K562 (cell line): ENCODE measurements at regions of chr3 and their contacts with region 1.

Region 1: GRCh38 chr3:196081791-196082618 is at the start of gene TFRC:
- DNase-seq: peak; percentile 99
- ATAC-seq: peak; percentile 89
- H3K4me3 ChIP-seq: peak within 1 kb of the TSS; percentile 90
- H3K27ac ChIP-seq: peak within 1 kb of the TSS; percentile 89
- H3K4me1 ChIP-seq: peaks cover 10 to 14% of the 10 kb centered on the region in 2 experiments; a peak in 4 of 5 replicates
- H3K27me3 ChIP-seq: no peaks in the 10 kb centered on the region
- CTCF ChIP-seq: no peak; a peak in 1 of 6 replicates
- EP300 ChIP-seq: peak; percentile 59
- POLR2A ChIP-seq: peak; percentile 100
- RAD21 ChIP-seq: peak in 1 of 2 experiments; percentile 22; a peak in 2 of 4 replicates
- polyA plus RNA-seq, gene TFRC: 149 to 308 TPM

Region 2: DNA sequence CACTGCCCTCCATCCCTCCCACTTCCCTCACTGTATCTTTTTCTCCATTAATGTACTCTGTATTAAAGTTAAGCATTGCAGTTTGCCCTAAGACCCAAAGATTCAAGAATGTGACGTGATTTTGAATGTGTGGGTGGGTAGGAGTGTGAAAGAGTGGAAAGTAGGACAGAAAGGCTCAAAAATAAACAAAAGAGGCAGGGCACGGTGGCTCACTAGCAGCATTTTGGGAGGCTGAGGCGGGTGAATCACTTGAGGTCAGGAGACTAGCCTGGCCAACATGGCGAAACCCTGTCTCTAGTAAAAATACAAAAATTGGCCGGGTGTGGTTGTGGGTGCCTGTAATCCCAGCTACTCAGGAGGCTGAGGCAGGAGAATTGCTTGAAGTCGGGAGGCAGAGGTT is 18.5 kb before region 1 on chr3:
- CTCF ChIA-PET with region 1: no interaction called
- POLR2A ChIA-PET with region 1: interaction called, 25 read pairs
- in situ Hi-C with region 1: no loop called
- intact Hi-C with region 1: no loop called
- DNase-seq: no peak
- ATAC-seq: no peak
- H3K4me3 ChIP-seq: no peak overlapping the region
- H3K27ac ChIP-seq: no peak overlapping the region
- H3K4me1 ChIP-seq: no peaks in the 10 kb centered on the region
- H3K27me3 ChIP-seq: no peaks in the 10 kb centered on the region
- CTCF ChIP-seq: no peak
- EP300 ChIP-seq: no peak
- POLR2A ChIP-seq: peak; percentile 54
- RAD21 ChIP-seq: no peak

Region 3: DNA sequence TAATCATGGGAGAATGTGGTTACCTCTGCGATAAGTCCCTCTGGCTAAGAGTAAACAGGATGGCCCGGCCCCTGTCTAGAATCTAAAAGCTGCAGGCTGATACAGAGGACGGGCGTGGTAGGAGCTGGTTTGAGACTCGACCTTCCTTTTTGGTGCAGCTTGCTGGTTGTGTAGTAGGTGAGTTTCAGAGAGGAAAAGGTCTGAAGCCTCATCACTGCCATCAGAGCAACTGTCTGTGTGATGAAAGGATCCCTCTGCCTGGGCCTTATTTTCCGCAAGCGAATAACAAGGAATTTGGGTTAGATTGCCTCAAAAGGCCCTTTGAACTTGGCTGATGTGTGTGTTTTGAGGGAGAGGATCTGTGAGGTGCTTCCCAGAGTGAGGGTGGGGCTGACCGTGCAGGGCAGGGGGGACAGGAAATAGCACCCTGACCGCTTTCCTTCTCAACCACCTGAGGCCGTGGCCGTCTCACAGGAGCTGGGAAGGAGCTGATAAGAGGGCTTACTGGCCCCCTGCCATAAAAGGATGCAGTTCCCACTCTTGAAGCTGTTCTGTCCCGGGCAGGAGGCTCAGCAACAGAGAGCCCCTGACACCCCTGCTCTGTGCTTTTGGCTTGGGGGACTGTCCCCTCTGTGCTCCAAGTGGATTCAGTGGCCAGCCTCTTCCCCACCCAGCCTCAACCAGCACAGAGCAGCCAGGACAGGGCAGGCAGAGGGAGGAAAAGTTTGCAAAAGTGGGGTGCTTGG is 45.5 kb after region 1 on chr3:
- CTCF ChIA-PET with region 1: no interaction called
- POLR2A ChIA-PET with region 1: interaction called, 11 read pairs
- in situ Hi-C with region 1: no loop called
- intact Hi-C with region 1: loop called (anchors 1 kb)
- DNase-seq: peak; percentile 81 to 98 (median 88)
- ATAC-seq: peak; percentile 90
- H3K4me3 ChIP-seq: peak overlapping the region; percentile 14; the same call in 1 of the 2 replicates
- H3K27ac ChIP-seq: peak overlapping the region; percentile 96
- H3K4me1 ChIP-seq: peaks cover 33% of the 10 kb centered on the region in 2 experiments
- H3K27me3 ChIP-seq: no peaks in the 10 kb centered on the region
- CTCF ChIP-seq: peak in 2 of 3 experiments; percentile 15 to 49; a peak in 2 of 6 replicates
- EP300 ChIP-seq: peak; percentile 89
- POLR2A ChIP-seq: peak; percentile 53; the same call in 1 of the 2 replicates
- RAD21 ChIP-seq: peak; percentile 43 to 67; a peak in 3 of 4 replicates

Region 4: DNA sequence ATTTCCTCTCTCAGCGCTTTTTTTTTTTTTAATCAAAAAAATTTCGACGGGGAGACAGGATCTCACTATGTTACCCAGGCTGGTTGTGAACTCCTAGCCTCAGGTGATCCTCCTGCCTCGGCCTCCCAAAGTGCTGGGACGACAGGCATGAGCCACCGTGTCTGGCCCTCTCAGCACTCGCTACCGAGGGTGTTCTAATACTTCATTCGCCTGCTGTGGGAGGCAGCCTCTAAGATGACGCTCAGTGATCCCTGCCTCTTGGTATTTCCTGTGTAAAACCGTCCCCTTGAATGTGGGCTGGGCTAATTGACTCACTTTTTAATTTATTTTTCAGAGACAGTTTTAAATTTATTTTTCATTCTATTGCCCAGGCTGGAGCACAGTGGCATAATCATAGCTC is 62.7 kb after region 1 on chr3:
- CTCF ChIA-PET with region 1: no interaction called
- POLR2A ChIA-PET with region 1: interaction called, 39 read pairs
- in situ Hi-C with region 1: no loop called
- intact Hi-C with region 1: loop called (anchors 2 kb)
- DNase-seq: peak in 1 of 4 experiments; percentile 44
- ATAC-seq: no peak
- H3K4me3 ChIP-seq: peak overlapping the region; percentile 24; the same call in 1 of the 2 replicates
- H3K27ac ChIP-seq: peak overlapping the region; percentile 99
- H3K4me1 ChIP-seq: peaks cover 62 to 66% of the 10 kb centered on the region in 2 experiments
- H3K27me3 ChIP-seq: no peaks in the 10 kb centered on the region
- CTCF ChIP-seq: no peak
- EP300 ChIP-seq: no peak
- POLR2A ChIP-seq: no peak
- RAD21 ChIP-seq: no peak

Region 5: DNA sequence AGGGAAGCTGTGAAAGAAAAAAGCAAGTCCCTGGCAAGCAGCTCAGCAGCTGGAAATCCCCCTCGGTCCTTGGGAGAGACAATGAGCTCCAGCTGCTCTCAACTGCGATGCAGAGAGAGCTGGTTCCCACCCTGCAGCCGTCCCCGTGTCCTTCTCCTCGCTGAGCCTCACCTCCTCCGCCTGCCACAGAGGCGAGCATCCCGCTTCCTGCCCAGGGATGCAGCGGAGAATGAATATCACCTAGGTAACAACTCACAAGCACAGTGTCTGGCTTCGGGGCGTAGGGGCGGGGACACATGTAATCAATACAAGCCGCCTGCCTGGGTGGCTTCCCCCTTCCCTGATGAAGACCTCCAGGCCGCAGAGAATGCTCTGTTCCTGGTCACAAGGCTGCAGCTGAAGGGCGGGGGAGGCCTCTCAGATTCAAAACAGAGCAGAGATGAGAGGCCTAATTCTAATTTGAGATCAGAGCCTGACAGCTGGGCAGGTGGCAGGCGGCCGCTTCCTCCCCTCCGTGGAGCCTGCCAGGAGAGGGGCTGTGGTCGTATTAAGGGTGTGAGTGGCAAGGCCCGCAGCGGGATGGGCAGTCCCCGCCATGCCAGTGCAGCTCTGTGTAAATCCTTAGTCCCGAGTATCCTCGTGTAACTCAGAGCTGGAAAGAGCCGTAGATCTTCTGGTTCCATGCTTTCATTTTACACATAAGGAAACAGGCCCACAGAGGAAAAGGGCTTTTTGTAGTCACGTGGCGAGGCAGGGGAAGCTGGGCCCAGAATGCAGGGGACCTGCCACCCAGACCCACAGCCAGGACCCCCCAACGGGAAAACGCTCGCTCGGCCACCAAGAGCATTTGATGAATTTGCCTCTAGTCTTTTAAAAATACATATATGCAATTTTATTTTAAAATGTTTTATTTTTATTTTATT is 104.9 kb after region 1 on chr3:
- CTCF ChIA-PET with region 1: no interaction called
- POLR2A ChIA-PET with region 1: interaction called, 28 read pairs
- in situ Hi-C with region 1: loop called (anchors 5 kb)
- intact Hi-C with region 1: no loop called
- DNase-seq: no peak
- ATAC-seq: no peak
- H3K4me3 ChIP-seq: no peak overlapping the region
- H3K27ac ChIP-seq: no peak overlapping the region
- H3K4me1 ChIP-seq: peaks cover 22 to 70% of the 10 kb centered on the region in 2 experiments
- H3K27me3 ChIP-seq: no peaks in the 10 kb centered on the region
- CTCF ChIP-seq: no peak
- EP300 ChIP-seq: no peak
- POLR2A ChIP-seq: no peak
- RAD21 ChIP-seq: no peak

Region 6: DNA sequence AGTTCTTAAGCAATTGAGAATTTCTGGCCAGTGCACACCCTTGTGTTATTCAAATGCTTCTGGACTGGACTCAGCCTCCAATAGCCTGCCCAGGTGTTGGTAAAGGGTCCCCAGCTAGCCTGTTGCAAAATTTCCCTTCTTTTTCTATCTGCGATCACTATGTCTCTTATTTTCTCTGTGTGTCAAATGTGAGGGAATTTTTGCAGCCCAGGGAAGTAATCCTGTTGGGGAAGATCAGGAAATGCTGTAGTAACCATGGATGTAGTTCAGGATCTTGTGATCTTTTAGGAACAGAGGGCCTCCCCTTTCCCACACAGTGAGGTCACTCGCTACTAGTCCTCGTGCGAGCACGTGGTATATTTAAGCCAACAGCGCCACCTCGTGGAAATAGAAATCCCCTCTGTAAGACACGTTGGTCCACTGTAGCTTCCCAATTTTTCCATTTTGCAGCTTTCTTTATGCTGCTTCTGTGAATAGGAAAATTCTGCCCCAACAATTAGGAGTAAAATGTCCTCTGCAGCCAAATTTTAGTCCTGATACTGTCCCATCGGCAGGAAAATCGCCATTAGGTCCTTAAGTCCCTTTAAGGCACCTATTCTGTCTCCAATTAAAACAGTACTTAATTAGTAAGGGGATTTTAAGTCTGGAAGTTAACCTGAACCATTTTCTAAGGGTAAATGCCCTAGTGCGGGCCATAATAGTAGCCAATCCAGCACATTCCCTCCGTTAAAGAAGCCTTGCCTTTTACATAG is 437.1 kb after region 1 on chr3:
- CTCF ChIA-PET with region 1: no interaction called
- POLR2A ChIA-PET with region 1: interaction called, 4 read pairs
- in situ Hi-C with region 1: no loop called
- intact Hi-C with region 1: loop called (anchors 10 kb)
- DNase-seq: peak; percentile 77 to 95 (median 80)
- ATAC-seq: peak; percentile 89
- H3K4me3 ChIP-seq: no peak overlapping the region
- H3K27ac ChIP-seq: peak overlapping the region; percentile 61; the same call in 2 of the 3 replicates
- H3K4me1 ChIP-seq: peaks cover 12 to 48% of the 10 kb centered on the region in 2 experiments
- H3K27me3 ChIP-seq: no peaks in the 10 kb centered on the region
- CTCF ChIP-seq: peak; percentile 78 to 96 (median 83)
- EP300 ChIP-seq: 0 out of 2 replicates have a peak, but pooled peaks have one; percentile 37
- POLR2A ChIP-seq: no peak
- RAD21 ChIP-seq: peak; percentile 96 to 97